Activated CD4-positive, alpha-beta T cell treated with anti-CD3 and anti-CD28 coated beads for 36 hours (primary cell): ENCODE measurements at regions of chr19 and their contacts with region 1.

Region 1: GRCh38 chr19:50357178-50358100 is 8.0 kb downstream of the NAPSA start:
- DNase-seq: peak; percentile 93
- ATAC-seq: peak; percentile 62
- H3K4me3 Mint-ChIP-seq: peak overlapping the region; percentile 82
- H3K27ac Mint-ChIP-seq: peak overlapping the region; percentile 99
- H3K4me1 Mint-ChIP-seq: peaks cover 47% of the 10 kb centered on the region
- H3K27me3 Mint-ChIP-seq: peaks cover 3% of the 10 kb centered on the region

Region 2: DNA sequence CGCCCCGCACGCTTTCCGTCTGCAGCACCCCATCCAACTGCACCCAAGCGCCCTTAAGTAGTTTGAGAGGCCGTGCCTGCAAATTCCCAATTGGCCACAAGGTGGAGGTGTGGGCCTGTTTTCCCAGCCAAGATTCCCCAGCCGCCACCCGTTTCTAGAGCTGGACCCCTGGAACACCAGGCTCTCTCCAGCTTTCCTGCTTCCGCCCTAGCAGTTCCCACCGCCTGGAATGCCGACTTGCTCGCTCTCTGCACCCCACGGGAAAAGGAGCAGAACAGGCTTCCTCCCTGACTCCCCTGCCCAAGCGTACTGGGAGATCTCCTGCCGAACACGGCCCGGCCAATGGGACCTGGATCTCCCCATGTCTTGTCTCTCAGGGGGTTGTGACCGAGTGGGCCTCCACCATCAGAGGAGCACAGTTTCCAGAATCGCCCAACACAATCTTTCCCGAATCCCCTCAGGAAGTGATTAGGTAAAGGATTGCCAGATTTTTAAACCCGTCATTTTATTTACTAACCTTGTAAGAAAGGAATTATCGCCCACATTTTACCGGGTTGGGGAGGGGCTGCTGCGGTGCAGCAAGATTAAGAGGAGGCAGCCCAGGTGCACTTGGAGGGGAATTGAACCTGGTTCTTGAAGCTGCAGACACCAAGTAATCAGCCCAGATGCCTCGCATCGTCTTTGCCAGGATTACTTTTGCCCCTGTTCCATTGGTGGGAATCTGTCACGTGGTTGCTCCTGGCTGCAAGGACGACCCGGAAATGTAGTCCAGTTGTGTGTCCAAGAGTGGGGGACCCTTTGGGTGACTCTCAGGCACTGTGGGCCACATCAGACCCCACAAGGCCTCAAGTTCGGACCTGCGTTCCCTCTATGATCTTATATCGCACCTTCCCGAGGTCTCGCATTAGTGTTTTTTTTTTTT is 11.5 kb after region 1 on chr19:
- CTCF ChIA-PET with region 1: interaction called, 15 read pairs
- POLR2A ChIA-PET with region 1: no interaction called
- intact Hi-C with region 1: loop called in 1 of 2 experiments (anchors 1 kb)
- DNase-seq: peak; percentile 87
- ATAC-seq: peak; percentile 50
- H3K4me3 Mint-ChIP-seq: peak overlapping the region; percentile 82
- H3K27ac Mint-ChIP-seq: peak overlapping the region; percentile 90
- H3K4me1 Mint-ChIP-seq: peaks cover 45% of the 10 kb centered on the region
- H3K27me3 Mint-ChIP-seq: no peaks in the 10 kb centered on the region

Region 3: DNA sequence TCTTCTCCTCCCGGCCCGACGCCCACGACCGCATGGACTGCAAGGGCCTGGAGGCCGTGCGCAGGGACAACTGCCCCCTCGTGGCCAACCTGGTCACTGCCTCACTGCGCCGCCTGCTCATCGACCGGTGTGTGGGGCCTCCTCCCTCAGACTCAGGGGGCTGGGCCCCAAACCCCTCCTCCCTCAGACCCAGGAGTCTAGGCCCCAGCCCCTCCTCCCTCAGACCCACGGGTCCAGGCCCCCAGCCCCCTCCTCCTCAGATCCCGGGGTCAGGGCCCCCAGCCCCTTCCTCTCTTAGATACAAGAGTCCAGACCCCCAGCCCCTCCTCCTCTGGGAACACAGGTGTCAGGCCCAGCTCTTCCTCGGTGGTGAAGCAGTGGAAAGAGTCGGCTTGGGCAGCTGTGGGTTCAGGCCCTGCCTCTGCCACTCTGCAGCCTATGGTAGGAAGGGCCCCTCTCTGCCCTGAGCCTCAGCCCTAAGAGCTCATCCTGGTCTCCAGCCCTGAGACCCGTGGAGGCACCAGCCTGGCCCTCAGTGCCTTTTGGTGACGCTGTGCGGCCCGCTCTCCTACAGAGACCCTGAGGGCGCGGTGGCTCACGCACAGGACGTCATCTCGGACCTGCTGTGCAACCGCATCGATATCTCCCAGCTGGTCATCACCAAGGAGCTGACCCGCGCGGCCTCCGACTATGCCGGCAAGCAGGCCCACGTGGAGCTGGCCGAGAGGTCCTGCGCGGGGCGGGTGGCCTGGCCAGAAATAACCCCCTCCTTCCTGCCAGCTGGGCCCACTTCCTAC is 57.6 kb after region 1 on chr19:
- CTCF ChIA-PET with region 1: interaction called, 11 read pairs
- POLR2A ChIA-PET with region 1: no interaction called
- intact Hi-C with region 1: loop called (anchors 1 kb)
- DNase-seq: peak; percentile 87
- ATAC-seq: peak; percentile 83
- H3K4me3 Mint-ChIP-seq: no peak overlapping the region
- H3K27ac Mint-ChIP-seq: no peak overlapping the region
- H3K4me1 Mint-ChIP-seq: peaks cover 9% of the 10 kb centered on the region
- H3K27me3 Mint-ChIP-seq: peaks cover 8% of the 10 kb centered on the region

Region 4: GRCh38 chr19:50476224-50476942 is 118.9 kb after region 1 on chr19 and contains the starts of genes EMC10 and GARIN5A:
- CTCF ChIA-PET with region 1: interaction called, 5 read pairs
- POLR2A ChIA-PET with region 1: no interaction called
- intact Hi-C with region 1: loop called in 1 of 2 experiments (anchors 1 kb)
- DNase-seq: peak; percentile 98
- ATAC-seq: peak; percentile 98
- H3K4me3 Mint-ChIP-seq: peak within 1 kb of the TSS; percentile 90
- H3K27ac Mint-ChIP-seq: peak within 1 kb of the TSS; percentile 84
- H3K4me1 Mint-ChIP-seq: peaks cover 18% of the 10 kb centered on the region
- H3K27me3 Mint-ChIP-seq: no peaks in the 10 kb centered on the region
- total RNA-seq, gene EMC10: 33.4 to 34.7 TPM
- total RNA-seq, gene GARIN5A: 0.48 to 0.58 TPM

Region 5: DNA sequence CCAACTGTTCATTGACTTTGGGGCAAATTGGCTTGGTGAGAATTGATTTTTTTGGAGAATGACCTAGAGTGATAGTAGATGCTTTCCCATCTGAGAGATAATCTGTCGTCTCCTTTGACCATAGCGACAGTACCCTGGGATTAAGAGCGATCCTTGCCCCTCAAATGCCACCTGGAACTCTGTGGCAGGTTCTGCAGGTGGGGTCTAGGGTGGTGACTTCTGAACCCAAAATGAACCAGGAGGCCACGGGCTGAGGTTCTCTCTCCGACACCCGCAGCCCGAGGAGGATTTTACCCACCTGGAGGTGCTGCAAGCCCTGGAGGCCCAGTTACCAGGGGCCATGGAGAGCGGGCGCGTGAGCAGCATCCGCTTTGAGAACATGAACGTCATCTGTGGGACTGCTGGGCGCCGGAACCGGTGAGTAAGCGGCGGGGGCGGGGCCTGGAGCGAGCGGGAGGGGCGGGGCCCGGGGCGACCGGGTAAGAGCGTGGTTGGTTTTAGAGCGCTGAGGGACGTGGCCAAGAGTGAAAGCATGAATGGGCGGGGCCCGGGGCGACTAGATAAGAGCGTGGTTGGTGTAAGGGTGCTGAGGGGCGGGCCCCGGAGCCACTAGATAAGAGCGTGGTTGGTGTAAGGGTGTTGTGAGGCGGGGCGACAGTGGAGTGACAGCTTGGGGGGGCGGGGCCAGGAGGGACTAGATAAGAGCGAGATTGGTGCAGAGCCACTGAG is 300.4 kb after region 1 on chr19:
- CTCF ChIA-PET with region 1: no interaction called
- POLR2A ChIA-PET with region 1: no interaction called
- intact Hi-C with region 1: loop called in 1 of 2 experiments (anchors 5 kb)
- DNase-seq: peak; percentile 98
- ATAC-seq: peak; percentile 96
- H3K4me3 Mint-ChIP-seq: peak overlapping the region; percentile 76
- H3K27ac Mint-ChIP-seq: peak overlapping the region; percentile 93
- H3K4me1 Mint-ChIP-seq: peaks cover 20% of the 10 kb centered on the region
- H3K27me3 Mint-ChIP-seq: peaks cover 65% of the 10 kb centered on the region

Region 6: GRCh38 chr19:51441410-51442390 is 1084.3 kb after region 1 on chr19:
- CTCF ChIA-PET with region 1: no interaction called
- POLR2A ChIA-PET with region 1: no interaction called
- intact Hi-C with region 1: loop called in 1 of 2 experiments (anchors 5 kb)
- DNase-seq: peak; percentile 96
- ATAC-seq: peak; percentile 91
- H3K4me3 Mint-ChIP-seq: peak overlapping the region; percentile 72
- H3K27ac Mint-ChIP-seq: peak overlapping the region; percentile 95
- H3K4me1 Mint-ChIP-seq: peaks cover 67% of the 10 kb centered on the region
- H3K27me3 Mint-ChIP-seq: no peaks in the 10 kb centered on the region